CD8-positive, alpha-beta T cell (primary cell): ENCODE measurements at regions of chr10 and their contacts with region 1.

Region 1: DNA sequence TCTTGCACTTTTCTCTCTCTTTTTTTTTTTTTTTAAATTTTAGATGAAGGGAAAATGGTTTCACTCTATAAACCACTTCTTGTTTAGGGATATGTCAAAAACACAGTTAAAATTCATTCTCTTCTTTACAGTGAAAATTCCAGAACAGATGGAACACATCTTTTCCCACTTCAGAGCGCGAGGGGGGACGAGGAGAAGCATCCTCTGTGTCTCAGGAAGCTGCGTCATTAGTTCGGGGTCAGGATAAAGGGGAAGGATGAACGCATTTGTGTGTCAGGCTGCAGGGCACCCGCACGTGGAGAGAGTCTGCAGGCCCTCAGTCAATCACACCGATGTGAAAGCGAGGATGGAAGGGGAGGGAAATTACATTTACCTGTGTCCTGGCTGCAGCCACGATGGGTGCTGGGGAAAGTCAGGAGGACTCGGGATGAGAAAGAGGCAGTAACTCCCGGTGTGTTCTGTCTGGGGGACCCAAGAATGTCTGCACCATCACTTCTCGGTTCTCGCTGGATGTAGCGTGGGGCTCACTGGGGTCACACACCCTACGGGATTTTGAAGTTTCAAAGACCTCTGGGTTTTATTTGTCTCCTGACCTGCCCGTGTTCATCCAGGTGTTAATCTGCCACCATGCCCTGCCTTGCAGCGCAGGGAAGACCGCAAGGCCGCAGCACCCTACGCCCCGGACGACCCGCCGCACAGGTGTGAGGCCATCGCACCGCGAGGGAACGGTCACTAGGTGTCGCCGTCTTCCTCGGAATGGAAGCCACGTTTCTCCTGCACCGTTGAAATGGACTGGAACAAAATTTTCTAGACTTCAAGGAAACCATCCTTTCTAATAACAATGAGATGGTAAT is 66.7 kb upstream of the PITRM1 start:
- DNase-seq: peak; percentile 38 to 80 (median 73)
- ATAC-seq: peak; percentile 73
- H3K4me3 ChIP-seq: no peak overlapping the region
- H3K4me3 Mint-ChIP-seq: no peak overlapping the region
- H3K27ac ChIP-seq: no peak overlapping the region
- H3K27ac Mint-ChIP-seq: no peak overlapping the region
- H3K4me1 ChIP-seq: no peaks in the 10 kb centered on the region
- H3K4me1 Mint-ChIP-seq: peaks cover 4% of the 10 kb centered on the region
- H3K27me3 ChIP-seq: peaks cover 0 to 9% of the 10 kb centered on the region in 2 experiments
- H3K27me3 Mint-ChIP-seq: peaks cover 18% of the 10 kb centered on the region
- CTCF ChIP-seq: peak; percentile 92

Region 2: GRCh38 chr10:2978111-2978510 is 261.2 kb before region 1 on chr10:
- CTCF ChIA-PET with region 1: no interaction called
- POLR2A ChIA-PET with region 1: no interaction called
- intact Hi-C with region 1: no loop called
- DNase-seq: peak in 2 of 9 experiments; percentile 15 to 44
- ATAC-seq: no peak
- H3K4me3 ChIP-seq: no peak overlapping the region
- H3K4me3 Mint-ChIP-seq: no peak overlapping the region
- H3K27ac ChIP-seq: no peak overlapping the region
- H3K27ac Mint-ChIP-seq: no peak overlapping the region
- H3K4me1 ChIP-seq: no peaks in the 10 kb centered on the region
- H3K4me1 Mint-ChIP-seq: no peaks in the 10 kb centered on the region
- H3K27me3 ChIP-seq: no peaks in the 10 kb centered on the region
- H3K27me3 Mint-ChIP-seq: peaks cover 6% of the 10 kb centered on the region
- CTCF ChIP-seq: peak; percentile 42

Region 3: DNA sequence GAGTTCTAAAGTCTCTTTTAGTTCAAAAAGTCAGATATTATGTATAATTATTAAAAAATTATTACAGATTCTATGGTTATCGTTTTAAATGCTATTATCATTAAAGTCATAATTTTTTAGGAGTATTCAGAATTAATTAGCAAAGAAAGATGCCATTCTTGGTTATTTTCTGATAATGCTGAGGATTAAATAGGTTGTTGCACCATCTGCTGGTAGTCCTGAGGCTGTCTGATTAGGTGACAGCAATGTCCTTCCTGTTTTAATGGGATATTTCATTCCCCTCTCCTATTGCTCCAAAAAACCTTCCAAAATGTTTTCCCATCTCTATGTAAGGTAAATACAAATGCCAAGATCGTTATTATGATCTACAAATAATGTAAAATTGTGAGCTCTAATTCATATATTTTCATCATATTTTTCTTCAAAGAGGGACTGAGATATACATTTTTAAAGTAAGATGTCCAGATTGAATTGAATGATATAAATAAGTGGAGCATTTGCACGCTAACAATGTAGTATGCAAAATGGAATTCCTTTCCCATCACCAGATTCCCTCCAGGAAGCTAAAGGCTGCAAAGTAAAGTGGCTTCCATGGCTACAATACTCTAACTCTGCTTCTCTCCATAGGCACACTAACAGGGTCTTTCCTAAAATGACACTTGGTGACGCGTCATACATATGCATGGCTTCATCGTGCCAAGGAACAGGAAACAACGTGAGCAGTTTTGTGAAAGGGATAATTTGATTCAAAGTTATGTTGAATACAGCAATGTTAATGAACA is 1527.9 kb after region 1 on chr10:
- CTCF ChIA-PET with region 1: interaction called, 9 read pairs
- POLR2A ChIA-PET with region 1: no interaction called
- intact Hi-C with region 1: loop called (anchors 1 kb)
- DNase-seq: peak in 2 of 9 experiments; percentile 42 to 48
- ATAC-seq: no peak
- H3K4me3 ChIP-seq: no peak overlapping the region
- H3K4me3 Mint-ChIP-seq: no peak overlapping the region
- H3K27ac ChIP-seq: no peak overlapping the region
- H3K27ac Mint-ChIP-seq: no peak overlapping the region
- H3K4me1 ChIP-seq: no peaks in the 10 kb centered on the region
- H3K4me1 Mint-ChIP-seq: no peaks in the 10 kb centered on the region
- H3K27me3 ChIP-seq: peaks cover 0 to 2% of the 10 kb centered on the region in 2 experiments
- H3K27me3 Mint-ChIP-seq: peaks cover 15% of the 10 kb centered on the region
- CTCF ChIP-seq: peak; percentile 39